ENCODE measurements at regions of chr12 and their contacts with region 1.

Region 1: DNA sequence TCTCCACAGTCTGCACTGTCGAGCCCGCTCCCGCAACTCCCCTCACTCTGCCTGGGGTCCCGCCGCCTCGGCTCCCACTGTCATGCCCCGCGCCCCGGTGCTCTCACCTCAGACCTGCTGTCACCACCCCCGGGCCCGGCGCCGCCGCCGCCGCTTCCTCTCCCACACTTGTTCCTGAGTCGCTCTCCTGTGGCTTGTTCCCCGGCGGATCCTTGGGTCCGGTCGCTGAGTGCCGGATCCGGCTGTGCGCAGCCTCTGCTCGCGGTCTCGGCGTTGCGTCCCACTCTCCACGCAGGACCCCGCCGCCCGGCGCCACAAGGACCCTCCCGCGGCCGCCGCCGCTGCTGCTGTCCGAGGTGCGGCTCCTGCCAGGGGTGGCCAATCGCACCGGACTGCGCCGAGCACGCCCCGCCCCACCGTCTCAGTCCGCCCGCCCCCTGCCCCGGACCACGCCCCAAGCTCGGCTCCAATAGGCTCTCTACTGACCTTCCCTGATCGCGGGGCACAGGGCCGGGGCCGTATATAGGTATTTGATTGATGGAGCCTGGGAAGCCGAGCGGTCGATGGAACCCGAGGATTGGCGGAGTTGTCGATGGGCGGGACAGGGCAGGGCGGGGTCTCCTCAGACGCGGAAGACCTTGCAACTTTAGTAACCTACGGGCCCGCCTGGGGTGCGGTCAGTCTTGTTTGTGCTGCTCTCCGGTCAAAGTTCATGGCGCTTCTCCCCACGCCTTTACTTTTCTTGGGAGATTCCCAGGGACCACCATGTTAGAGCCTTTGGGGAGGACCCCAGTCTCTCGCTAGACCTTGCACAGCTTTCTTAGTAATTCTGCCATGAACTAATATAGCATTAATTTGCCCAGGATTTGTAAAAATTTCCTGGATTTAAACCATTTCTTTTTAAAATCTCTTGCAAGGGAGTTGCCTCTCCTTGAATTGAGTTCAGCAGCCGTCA is at the start of gene TAOK3:
- DNase-seq: peak; percentile 89 to 99
- ATAC-seq: peak; percentile 76 to 94
- H3K4me3 ChIP-seq: peak within 1 kb of the TSS; percentile 74
- H3K27ac ChIP-seq: peak within 1 kb of the TSS; percentile 83 to 89
- H3K4me1 ChIP-seq: peaks cover 19% of the 10 kb centered on the region
- CTCF ChIP-seq: no peak
- EP300 ChIP-seq: no peak
- POLR2A ChIP-seq: peak; percentile 85
- RAD21 ChIP-seq: 0 out of 5 replicates have a peak, but pooled peaks of 1 of the 2 experiments have one; percentile 13
- polyA plus RNA-seq, gene TAOK3: 27.6 and 32.4 TPM in 2 replicates

Region 2: GRCh38 chr12:118120579-118121363 is 252.0 kb before region 1 on chr12:
- CTCF ChIA-PET with region 1: interaction called, 13 read pairs
- POLR2A ChIA-PET with region 1: interaction called, 3 read pairs
- DNase-seq: peak; percentile 69 to 94
- ATAC-seq: peak; percentile 89 to 92
- H3K4me3 ChIP-seq: no peak overlapping the region
- H3K27ac ChIP-seq: peak overlapping the region in 1 of 2 experiments; percentile 55; a peak in 2 of 6 replicates
- H3K4me1 ChIP-seq: peaks cover 13% of the 10 kb centered on the region
- CTCF ChIP-seq: peak; percentile 75
- EP300 ChIP-seq: no peak
- POLR2A ChIP-seq: no peak
- RAD21 ChIP-seq: peak; percentile 60 to 75

Region 3: DNA sequence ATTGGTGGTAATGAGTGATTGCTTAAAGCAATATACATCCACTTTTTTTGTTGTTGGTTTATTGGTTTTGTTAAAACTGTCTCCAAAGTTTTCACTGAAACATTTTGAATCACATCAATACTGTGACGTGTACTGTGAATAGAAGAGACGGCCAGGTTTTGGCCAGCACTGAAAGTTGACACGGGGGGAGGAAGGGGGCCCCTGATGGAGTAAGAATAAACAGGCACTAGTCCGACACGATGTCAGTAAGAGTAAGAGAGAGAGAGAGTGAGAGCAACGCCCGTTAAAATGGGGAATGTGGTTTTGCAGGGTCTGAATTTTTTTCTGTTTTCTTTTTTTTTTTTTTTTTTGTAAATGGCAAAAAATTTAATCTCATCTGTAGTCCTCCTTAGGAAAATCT is 222.2 kb before region 1 on chr12:
- CTCF ChIA-PET with region 1: interaction called, 11 read pairs
- POLR2A ChIA-PET with region 1: interaction called, 3 read pairs
- DNase-seq: no peak
- ATAC-seq: no peak
- H3K4me3 ChIP-seq: no peak overlapping the region
- H3K27ac ChIP-seq: no peak overlapping the region
- H3K4me1 ChIP-seq: no peaks in the 10 kb centered on the region
- CTCF ChIP-seq: no peak
- EP300 ChIP-seq: no peak
- POLR2A ChIP-seq: no peak
- RAD21 ChIP-seq: no peak

Region 4: GRCh38 chr12:118175823-118176447 is 196.9 kb before region 1 on chr12:
- CTCF ChIA-PET with region 1: interaction called, 193 read pairs
- POLR2A ChIA-PET with region 1: interaction called, 4 read pairs
- DNase-seq: no peak
- ATAC-seq: no peak
- H3K4me3 ChIP-seq: no peak overlapping the region
- H3K27ac ChIP-seq: no peak overlapping the region
- H3K4me1 ChIP-seq: no peaks in the 10 kb centered on the region
- CTCF ChIP-seq: no peak
- EP300 ChIP-seq: no peak
- POLR2A ChIP-seq: no peak
- RAD21 ChIP-seq: no peak

Region 5: GRCh38 chr12:118315821-118316220 is 57.0 kb before region 1 on chr12:
- CTCF ChIA-PET with region 1: interaction called, 12 read pairs
- POLR2A ChIA-PET with region 1: no interaction called
- DNase-seq: no peak
- ATAC-seq: no peak
- H3K4me3 ChIP-seq: no peak overlapping the region
- H3K27ac ChIP-seq: no peak overlapping the region
- H3K4me1 ChIP-seq: peaks cover 4% of the 10 kb centered on the region; the same call in 1 of the 3 replicates
- CTCF ChIP-seq: no peak
- EP300 ChIP-seq: no peak
- POLR2A ChIP-seq: no peak
- RAD21 ChIP-seq: no peak

Region 6: GRCh38 chr12:118357257-118358007 is 15.4 kb before region 1 on chr12:
- CTCF ChIA-PET with region 1: interaction called, 38 read pairs
- POLR2A ChIA-PET with region 1: interaction called, 13 read pairs
- DNase-seq: peak; percentile 56 to 76
- ATAC-seq: peak; percentile 63 to 64; a peak in 3 of 6 replicates
- H3K4me3 ChIP-seq: no peak overlapping the region
- H3K27ac ChIP-seq: peak overlapping the region; percentile 51 to 66
- H3K4me1 ChIP-seq: peaks cover 48% of the 10 kb centered on the region
- CTCF ChIP-seq: peak; percentile 39
- EP300 ChIP-seq: no peak
- POLR2A ChIP-seq: no peak
- RAD21 ChIP-seq: no peak

Region 7: GRCh38 chr12:118404876-118405521 is 32.2 kb after region 1 on chr12:
- CTCF ChIA-PET with region 1: interaction called, 75 read pairs
- POLR2A ChIA-PET with region 1: no interaction called
- DNase-seq: peak; percentile 41 to 69
- ATAC-seq: peak; percentile 88 to 92
- H3K4me3 ChIP-seq: no peak overlapping the region
- H3K27ac ChIP-seq: no peak overlapping the region
- H3K4me1 ChIP-seq: no peaks in the 10 kb centered on the region
- CTCF ChIP-seq: peak; percentile 92
- EP300 ChIP-seq: no peak
- POLR2A ChIP-seq: no peak
- RAD21 ChIP-seq: peak; percentile 81 to 84